PC-3 (cell line): ENCODE measurements at regions of chr11 and their contacts with region 1.

Region 1: DNA sequence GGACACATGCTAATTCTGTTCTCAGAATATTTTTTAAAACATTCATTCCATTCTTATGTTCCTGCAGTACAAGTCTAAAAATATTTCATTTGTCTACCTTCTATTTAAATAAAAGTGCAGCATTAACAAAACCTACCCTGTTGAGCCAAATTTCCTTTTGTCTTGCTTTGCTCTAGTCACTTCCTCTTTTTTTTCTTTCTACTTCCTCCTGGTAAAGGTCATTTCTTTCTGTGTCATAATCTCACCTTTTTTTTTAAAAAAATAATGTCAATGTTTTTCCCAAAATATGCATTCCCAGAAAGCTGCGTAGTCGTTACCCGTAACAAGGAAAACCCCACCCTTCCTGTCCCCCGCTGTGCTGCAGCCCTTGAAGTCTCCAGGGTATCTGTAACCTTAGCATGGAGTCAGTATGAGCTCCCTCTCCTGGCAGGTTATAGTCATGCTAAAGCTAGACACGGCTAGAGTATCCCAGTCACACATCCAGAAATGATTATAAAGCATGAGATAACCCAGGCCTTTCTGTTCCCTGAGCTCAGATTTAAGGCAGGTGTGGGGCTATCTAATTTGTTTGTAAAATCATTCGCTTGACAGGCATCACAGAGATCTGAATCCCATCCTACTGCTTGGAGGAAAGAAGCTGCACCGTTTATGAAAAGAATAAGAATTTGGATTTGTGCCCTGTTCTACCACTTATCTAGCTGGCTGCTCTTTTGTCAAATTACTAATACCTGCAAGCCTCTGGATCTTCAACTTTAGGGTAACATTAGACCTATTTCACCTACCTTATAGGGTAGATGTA is 51.1 kb upstream of the EED start:
- DNase-seq: peak; percentile 78
- ATAC-seq: peak; percentile 98
- H3K4me3 ChIP-seq: peak overlapping the region; percentile 60
- H3K27ac ChIP-seq: no peak overlapping the region
- H3K4me1 ChIP-seq: peaks cover 7% of the 10 kb centered on the region; the same call in 1 of the 2 replicates
- H3K27me3 ChIP-seq: no peaks in the 10 kb centered on the region
- CTCF ChIP-seq: peak; percentile 82

Region 2: DNA sequence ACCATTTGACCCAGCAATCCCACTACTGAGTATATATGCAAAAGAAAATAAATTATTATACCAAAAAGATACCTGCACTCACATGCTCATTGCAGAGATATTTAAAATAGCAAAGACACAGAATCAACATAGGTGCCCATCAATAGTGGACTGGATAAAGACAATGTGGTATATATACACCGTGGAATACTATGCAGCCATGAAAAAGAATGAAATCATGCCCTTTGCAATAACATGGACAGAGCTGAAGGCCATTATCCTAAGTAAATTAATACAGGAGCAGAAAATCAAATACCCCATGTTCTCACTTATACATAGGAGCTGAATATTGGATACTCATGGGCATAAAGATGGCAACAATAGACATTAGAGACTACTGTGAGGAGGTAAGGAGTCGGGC is 635.1 kb before region 1 on chr11:
- CTCF ChIA-PET with region 1: no interaction called
- POLR2A ChIA-PET with region 1: no interaction called
- intact Hi-C with region 1: no loop called
- DNase-seq: no peak
- ATAC-seq: no peak
- H3K4me3 ChIP-seq: no peak overlapping the region
- H3K27ac ChIP-seq: no peak overlapping the region
- H3K4me1 ChIP-seq: no peaks in the 10 kb centered on the region
- H3K27me3 ChIP-seq: peaks cover 7% of the 10 kb centered on the region; the same call in 1 of the 2 replicates
- CTCF ChIP-seq: no peak

Region 3: DNA sequence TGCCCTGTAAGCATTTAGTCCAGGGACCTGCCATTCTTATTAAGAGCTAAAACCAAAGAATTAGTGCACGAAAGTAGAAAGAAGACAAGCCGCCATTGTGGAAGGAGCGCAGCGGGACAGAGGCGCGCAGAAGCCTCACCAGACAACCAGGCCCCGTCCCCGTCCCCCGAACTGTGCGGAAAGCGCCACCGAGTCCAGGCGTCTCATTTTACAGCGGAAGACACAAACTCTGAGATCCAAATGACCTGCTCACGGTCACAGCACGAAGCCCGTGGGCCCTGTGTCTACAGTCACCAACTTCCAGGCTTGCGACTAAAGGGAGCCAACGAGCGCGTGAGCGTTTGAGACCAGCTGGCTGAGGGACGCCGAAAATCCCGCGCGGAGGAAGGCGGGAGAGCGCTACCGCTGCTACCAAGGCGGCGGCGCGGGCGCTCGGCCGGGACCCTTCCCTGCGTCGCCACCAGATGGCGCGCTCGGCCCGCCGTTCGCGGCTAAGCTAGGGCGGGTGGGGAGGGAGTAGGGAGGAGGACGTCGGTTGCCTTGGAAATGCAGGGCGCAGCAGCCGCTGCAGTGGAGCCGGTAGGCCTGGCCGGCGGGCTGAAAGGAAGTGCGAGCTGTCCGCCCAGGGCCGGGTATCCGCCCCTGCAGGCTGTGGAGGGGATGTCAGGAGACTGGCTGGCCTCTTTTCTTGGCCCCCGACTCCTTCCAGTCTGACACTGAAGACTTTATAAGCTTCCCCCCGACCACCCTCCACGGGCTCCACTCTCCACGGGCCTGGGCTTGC is 338.7 kb before region 1 on chr11:
- CTCF ChIA-PET with region 1: interaction called, 4 read pairs
- POLR2A ChIA-PET with region 1: no interaction called
- intact Hi-C with region 1: loop called (anchors 10 kb)
- DNase-seq: peak; percentile 99
- ATAC-seq: peak; percentile 94
- H3K4me3 ChIP-seq: peak overlapping the region; percentile 78
- H3K27ac ChIP-seq: peak overlapping the region; percentile 84
- H3K4me1 ChIP-seq: peaks cover 17% of the 10 kb centered on the region
- H3K27me3 ChIP-seq: no peaks in the 10 kb centered on the region
- CTCF ChIP-seq: peak; percentile 68

Region 4: DNA sequence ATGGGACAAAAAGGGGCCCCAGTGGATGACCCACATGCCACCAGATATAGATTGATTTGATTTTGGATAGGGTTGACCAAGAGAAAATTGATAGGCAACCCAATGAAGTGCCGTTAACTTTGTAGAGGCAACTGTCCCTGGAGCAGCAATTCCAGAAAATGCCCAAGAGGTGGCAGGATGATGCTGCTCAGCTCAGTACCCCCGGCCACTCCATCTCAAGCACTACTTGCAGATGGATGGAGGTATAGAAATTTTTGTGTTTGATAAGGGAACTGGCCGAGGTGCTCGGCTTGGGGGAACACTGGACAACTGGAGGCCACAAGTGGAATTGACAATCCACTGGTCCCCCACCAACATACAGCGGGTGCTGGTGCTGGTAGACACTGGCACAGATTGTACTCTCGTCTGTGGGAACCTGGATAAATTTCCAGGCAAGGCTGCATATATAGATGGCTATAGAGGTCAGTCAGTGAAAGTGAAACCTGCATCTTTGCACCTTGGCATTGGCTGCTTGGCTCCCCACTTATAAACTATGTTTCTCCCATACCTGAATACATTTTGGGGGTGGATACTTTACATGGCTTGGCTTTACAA is 252.0 kb before region 1 on chr11:
- CTCF ChIA-PET with region 1: no interaction called
- POLR2A ChIA-PET with region 1: no interaction called
- intact Hi-C with region 1: loop called (anchors 10 kb)
- DNase-seq: peak; percentile 59
- ATAC-seq: peak; percentile 64
- H3K4me3 ChIP-seq: no peak overlapping the region
- H3K27ac ChIP-seq: no peak overlapping the region
- H3K4me1 ChIP-seq: no peaks in the 10 kb centered on the region
- H3K27me3 ChIP-seq: no peaks in the 10 kb centered on the region
- CTCF ChIP-seq: peak; percentile 63

Region 5: GRCh38 chr11:85977751-85978160 is 215.7 kb before region 1 on chr11:
- CTCF ChIA-PET with region 1: interaction called, 12 read pairs
- POLR2A ChIA-PET with region 1: no interaction called
- intact Hi-C with region 1: no loop called
- DNase-seq: no peak
- ATAC-seq: no peak
- H3K4me3 ChIP-seq: no peak overlapping the region
- H3K27ac ChIP-seq: no peak overlapping the region
- H3K4me1 ChIP-seq: no peaks in the 10 kb centered on the region
- H3K27me3 ChIP-seq: no peaks in the 10 kb centered on the region
- CTCF ChIP-seq: no peak

Region 6: DNA sequence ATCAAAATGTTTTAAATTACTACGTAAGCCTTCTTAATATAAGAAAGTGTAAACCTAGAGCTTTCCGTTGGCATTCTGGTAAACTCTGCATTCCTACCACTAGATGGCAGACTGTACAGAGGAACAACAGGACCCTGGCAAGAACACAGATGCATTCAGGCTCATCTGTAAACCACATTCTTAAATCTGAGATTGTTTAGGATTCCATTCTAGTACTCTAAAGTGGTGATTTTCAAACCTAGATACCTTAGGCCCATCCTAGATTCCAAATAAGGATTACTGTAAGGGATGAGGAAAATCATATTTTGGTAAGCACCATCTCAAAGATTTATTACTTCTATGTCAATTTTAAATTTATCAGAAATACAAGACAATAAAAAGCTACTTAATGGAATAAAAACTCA is 151.5 kb before region 1 on chr11:
- CTCF ChIA-PET with region 1: interaction called, 7 read pairs
- POLR2A ChIA-PET with region 1: no interaction called
- intact Hi-C with region 1: loop called (anchors 1 kb)
- DNase-seq: peak; percentile 92
- ATAC-seq: peak; percentile 64
- H3K4me3 ChIP-seq: no peak overlapping the region
- H3K27ac ChIP-seq: no peak overlapping the region
- H3K4me1 ChIP-seq: peaks cover 3% of the 10 kb centered on the region; the same call in 1 of the 2 replicates
- H3K27me3 ChIP-seq: no peaks in the 10 kb centered on the region
- CTCF ChIP-seq: peak; percentile 82

Region 7: GRCh38 chr11:86138958-86139357 is 54.5 kb before region 1 on chr11:
- CTCF ChIA-PET with region 1: no interaction called
- POLR2A ChIA-PET with region 1: no interaction called
- intact Hi-C with region 1: no loop called
- DNase-seq: no peak
- ATAC-seq: no peak
- H3K4me3 ChIP-seq: no peak overlapping the region
- H3K27ac ChIP-seq: no peak overlapping the region
- H3K4me1 ChIP-seq: peaks cover 10% of the 10 kb centered on the region; the same call in 1 of the 2 replicates
- H3K27me3 ChIP-seq: no peaks in the 10 kb centered on the region
- CTCF ChIP-seq: no peak